CD4-positive, alpha-beta T cell (primary cell): ENCODE measurements at regions of chr18 and their contacts with region 1.

Region 1: DNA sequence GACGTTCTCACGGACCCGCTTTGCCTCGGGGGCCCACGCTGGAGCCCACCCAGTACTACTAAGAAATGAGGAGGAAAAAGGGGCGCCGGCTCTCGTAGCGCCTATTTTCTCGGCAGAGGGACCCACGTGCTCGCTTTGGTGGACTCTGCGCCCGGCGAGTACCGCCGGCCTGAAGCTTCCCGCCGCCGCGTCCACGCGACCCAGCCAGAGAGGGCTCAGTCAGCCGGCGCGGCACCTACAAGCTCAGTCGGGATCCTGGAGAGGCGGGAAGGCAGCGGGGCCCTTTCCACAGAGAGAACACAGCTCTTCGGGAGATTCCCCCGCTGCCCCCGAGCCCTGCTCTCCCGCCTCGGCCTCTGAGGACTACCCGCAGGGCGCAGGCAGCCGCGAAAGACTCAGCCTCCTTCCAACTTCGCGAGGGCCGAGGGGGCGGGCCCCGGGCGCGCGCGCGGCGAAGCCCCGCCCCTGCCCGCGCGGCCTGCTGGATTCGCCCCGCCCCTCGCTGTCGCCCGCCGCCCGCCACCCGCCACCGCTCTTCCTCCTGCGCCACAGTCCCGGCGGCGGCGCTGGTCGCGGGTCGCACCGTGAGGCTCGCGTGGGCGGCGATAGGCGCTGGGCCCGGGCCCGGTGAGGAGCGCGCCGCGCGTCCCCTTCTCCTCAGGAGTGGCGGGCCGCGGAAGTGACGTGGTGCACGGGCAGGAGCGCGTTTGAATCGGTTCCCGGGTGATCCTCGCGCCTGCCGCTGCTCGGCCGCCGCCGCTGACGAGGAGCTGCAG is at the start of gene SMCHD1:
- DNase-seq: peak; percentile 73 to 96 (median 87)
- ATAC-seq: peak; percentile 67
- H3K4me3 ChIP-seq: peak within 1 kb of the TSS; percentile 97
- H3K4me3 Mint-ChIP-seq: peak within 1 kb of the TSS; percentile 97
- H3K27ac ChIP-seq: peak within 1 kb of the TSS; percentile 99
- H3K27ac Mint-ChIP-seq: peak within 1 kb of the TSS; percentile 89
- H3K4me1 ChIP-seq: peaks cover 25% of the 10 kb centered on the region
- H3K4me1 Mint-ChIP-seq: peaks cover 55% of the 10 kb centered on the region
- H3K27me3 ChIP-seq: no peaks in the 10 kb centered on the region
- H3K27me3 Mint-ChIP-seq: no peaks in the 10 kb centered on the region
- CTCF ChIP-seq: no peak
- total RNA-seq, gene SMCHD1: 357 to 359 TPM

Region 2: GRCh38 chr18:2547477-2548087 is 107.8 kb before region 1 on chr18:
- CTCF ChIA-PET with region 1: interaction called, 3 read pairs
- POLR2A ChIA-PET with region 1: interaction called, 11 read pairs
- intact Hi-C with region 1: no loop called
- DNase-seq: peak in 3 of 14 experiments; percentile 50 to 67 (median 66)
- ATAC-seq: peak; percentile 62
- H3K4me3 ChIP-seq: no peak overlapping the region
- H3K4me3 Mint-ChIP-seq: no peak overlapping the region
- H3K27ac ChIP-seq: no peak overlapping the region
- H3K27ac Mint-ChIP-seq: no peak overlapping the region
- H3K4me1 ChIP-seq: no peaks in the 10 kb centered on the region
- H3K4me1 Mint-ChIP-seq: peaks cover 18% of the 10 kb centered on the region
- H3K27me3 ChIP-seq: no peaks in the 10 kb centered on the region
- H3K27me3 Mint-ChIP-seq: no peaks in the 10 kb centered on the region
- CTCF ChIP-seq: peak; percentile 88

Region 3: GRCh38 chr18:2589345-2590068 is 65.9 kb before region 1 on chr18:
- CTCF ChIA-PET with region 1: interaction called, 3 read pairs
- POLR2A ChIA-PET with region 1: interaction called, 68 read pairs
- intact Hi-C with region 1: loop called in 1 of 2 experiments (anchors 2 kb)
- DNase-seq: peak in 4 of 14 experiments; percentile 7 to 54 (median 50)
- ATAC-seq: peak; percentile 86
- H3K4me3 ChIP-seq: peak overlapping the region; percentile 41
- H3K4me3 Mint-ChIP-seq: peak overlapping the region; percentile 78
- H3K27ac ChIP-seq: peak overlapping the region; percentile 47 to 84
- H3K27ac Mint-ChIP-seq: peak overlapping the region; percentile 89
- H3K4me1 ChIP-seq: peaks cover 15% of the 10 kb centered on the region
- H3K4me1 Mint-ChIP-seq: peaks cover 52% of the 10 kb centered on the region
- H3K27me3 ChIP-seq: no peaks in the 10 kb centered on the region
- H3K27me3 Mint-ChIP-seq: no peaks in the 10 kb centered on the region
- CTCF ChIP-seq: no peak

Region 4: GRCh38 chr18:2606335-2606734 is 49.0 kb before region 1 on chr18:
- CTCF ChIA-PET with region 1: interaction called, 8 read pairs
- POLR2A ChIA-PET with region 1: interaction called, 151 read pairs
- intact Hi-C with region 1: loop called in 1 of 2 experiments (anchors 2 kb)
- DNase-seq: peak in 3 of 14 experiments; percentile 53 to 62 (median 58)
- ATAC-seq: peak; percentile 70
- H3K4me3 ChIP-seq: no peak overlapping the region
- H3K4me3 Mint-ChIP-seq: peak overlapping the region; percentile 57
- H3K27ac ChIP-seq: peak overlapping the region in 1 of 2 donors; percentile 48
- H3K27ac Mint-ChIP-seq: peak overlapping the region; percentile 91
- H3K4me1 ChIP-seq: peaks cover 12% of the 10 kb centered on the region
- H3K4me1 Mint-ChIP-seq: peaks cover 58% of the 10 kb centered on the region
- H3K27me3 ChIP-seq: no peaks in the 10 kb centered on the region
- H3K27me3 Mint-ChIP-seq: no peaks in the 10 kb centered on the region
- CTCF ChIP-seq: no peak

Region 5: GRCh38 chr18:2641638-2642037 is 13.7 kb before region 1 on chr18:
- CTCF ChIA-PET with region 1: interaction called, 32 read pairs
- POLR2A ChIA-PET with region 1: interaction called, 698 read pairs
- intact Hi-C with region 1: loop called (anchors 1 kb)
- DNase-seq: peak in 3 of 14 experiments; percentile 71 to 87 (median 76)
- ATAC-seq: peak; percentile 17
- H3K4me3 ChIP-seq: peak overlapping the region; percentile 32
- H3K4me3 Mint-ChIP-seq: peak overlapping the region; percentile 72
- H3K27ac ChIP-seq: peak overlapping the region; percentile 48 to 65
- H3K27ac Mint-ChIP-seq: no peak overlapping the region
- H3K4me1 ChIP-seq: peaks cover 74% of the 10 kb centered on the region
- H3K4me1 Mint-ChIP-seq: peaks cover 55% of the 10 kb centered on the region
- H3K27me3 ChIP-seq: no peaks in the 10 kb centered on the region
- H3K27me3 Mint-ChIP-seq: no peaks in the 10 kb centered on the region
- CTCF ChIP-seq: no peak

Region 6: GRCh38 chr18:2680216-2680792 is 24.9 kb after region 1 on chr18:
- CTCF ChIA-PET with region 1: interaction called, 3 read pairs
- POLR2A ChIA-PET with region 1: interaction called, 29 read pairs
- intact Hi-C with region 1: loop called in 1 of 2 experiments (anchors 2 kb)
- DNase-seq: no peak
- ATAC-seq: peak; percentile 19
- H3K4me3 ChIP-seq: no peak overlapping the region
- H3K4me3 Mint-ChIP-seq: peak overlapping the region; percentile 2
- H3K27ac ChIP-seq: peak overlapping the region in 1 of 2 donors; percentile 13
- H3K27ac Mint-ChIP-seq: peak overlapping the region; percentile 40
- H3K4me1 ChIP-seq: peaks cover 15% of the 10 kb centered on the region
- H3K4me1 Mint-ChIP-seq: peaks cover 81% of the 10 kb centered on the region
- H3K27me3 ChIP-seq: no peaks in the 10 kb centered on the region
- H3K27me3 Mint-ChIP-seq: no peaks in the 10 kb centered on the region
- CTCF ChIP-seq: no peak

Region 7: DNA sequence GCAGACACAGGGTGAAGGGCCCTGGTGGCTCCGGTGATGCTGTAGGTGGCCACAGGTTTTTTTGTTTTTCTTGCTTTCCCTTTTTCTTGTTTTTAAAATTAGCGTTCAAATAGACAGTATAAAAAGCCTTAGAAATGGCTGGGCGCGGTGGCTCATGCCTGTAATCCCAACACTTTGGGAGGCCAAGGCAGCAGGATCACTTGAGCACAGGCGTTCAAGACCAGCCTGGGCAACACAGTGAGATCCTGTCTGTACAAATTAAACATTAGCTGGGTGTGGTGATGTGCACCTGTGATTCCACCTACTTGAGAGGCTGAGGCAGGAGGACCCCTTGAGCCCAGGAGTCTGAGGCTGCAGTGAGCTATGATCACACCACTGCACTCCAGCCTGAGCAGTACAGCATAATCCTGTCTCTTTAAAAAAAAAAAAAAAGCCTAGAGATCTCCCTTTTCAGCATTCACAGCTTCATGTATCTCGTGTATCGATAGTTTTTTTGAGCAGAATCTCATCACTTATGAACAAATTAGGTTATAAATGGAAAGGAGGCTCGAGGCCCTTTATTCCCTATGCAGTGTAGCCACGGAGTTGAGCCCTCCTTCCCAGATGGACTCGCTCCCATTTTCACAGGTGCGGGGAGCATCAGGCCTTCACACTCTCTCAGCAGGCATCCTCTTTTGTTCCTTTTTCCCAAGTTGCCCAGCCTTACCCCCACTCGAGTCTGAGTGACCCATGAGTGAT is 242.3 kb after region 1 on chr18:
- CTCF ChIA-PET with region 1: no interaction called
- POLR2A ChIA-PET with region 1: no interaction called
- intact Hi-C with region 1: no loop called
- DNase-seq: no peak
- ATAC-seq: no peak
- H3K4me3 ChIP-seq: no peak overlapping the region
- H3K4me3 Mint-ChIP-seq: no peak overlapping the region
- H3K27ac ChIP-seq: no peak overlapping the region
- H3K27ac Mint-ChIP-seq: no peak overlapping the region
- H3K4me1 ChIP-seq: peaks cover 37% of the 10 kb centered on the region
- H3K4me1 Mint-ChIP-seq: peaks cover 9% of the 10 kb centered on the region
- H3K27me3 ChIP-seq: no peaks in the 10 kb centered on the region
- H3K27me3 Mint-ChIP-seq: no peaks in the 10 kb centered on the region
- CTCF ChIP-seq: no peak

Region 8: GRCh38 chr18:3261371-3262246 is 606.2 kb after region 1 on chr18 and contains the start of gene MYL12B:
- CTCF ChIA-PET with region 1: no interaction called
- POLR2A ChIA-PET with region 1: interaction called, 6 read pairs
- intact Hi-C with region 1: loop called in 1 of 2 experiments (anchors 10 kb)
- DNase-seq: peak; percentile 63 to 92 (median 75)
- ATAC-seq: peak; percentile 71
- H3K4me3 ChIP-seq: peak within 1 kb of the TSS; percentile 68
- H3K4me3 Mint-ChIP-seq: peak within 1 kb of the TSS; percentile 100
- H3K27ac ChIP-seq: peak within 1 kb of the TSS; percentile 95 to 98
- H3K27ac Mint-ChIP-seq: peak within 1 kb of the TSS; percentile 100
- H3K4me1 ChIP-seq: peaks cover 43% of the 10 kb centered on the region
- H3K4me1 Mint-ChIP-seq: peaks cover 85% of the 10 kb centered on the region
- H3K27me3 ChIP-seq: no peaks in the 10 kb centered on the region
- H3K27me3 Mint-ChIP-seq: no peaks in the 10 kb centered on the region
- CTCF ChIP-seq: no peak
- total RNA-seq, gene MYL12B: 128 to 133 TPM